Lower leg skin (tissue), 4 donors: ENCODE measurements at regions of chr4 and their contacts with region 1.

Region 1: DNA sequence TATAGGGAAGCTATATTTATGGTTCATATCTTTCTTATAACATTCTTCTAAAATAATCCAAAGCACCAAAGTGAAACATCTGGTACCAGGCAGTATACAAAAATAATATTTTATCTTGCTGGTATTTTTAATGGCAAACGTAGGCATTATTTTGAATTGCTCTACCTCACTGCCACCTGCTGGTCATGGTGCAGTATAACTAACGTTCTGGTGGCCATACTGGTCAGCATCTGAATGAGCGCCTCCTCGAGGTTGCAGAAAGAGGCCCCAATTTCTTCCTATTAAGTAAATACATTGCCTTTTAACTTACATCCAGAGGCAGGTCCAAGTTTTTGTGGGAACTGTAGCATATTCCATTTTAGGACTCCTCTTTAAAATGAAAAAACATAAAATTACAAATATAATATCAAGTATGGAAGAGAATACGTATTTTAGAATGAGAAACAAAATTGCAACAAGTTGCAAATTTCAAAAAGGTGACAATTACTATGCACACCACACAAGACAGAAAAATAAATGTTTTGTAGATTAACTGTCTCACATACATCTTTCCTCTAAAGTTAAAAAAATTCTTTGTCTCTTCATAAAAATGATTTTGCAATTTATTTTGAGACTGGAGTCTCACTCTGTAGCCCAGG is 22.9 kb upstream of the CWH43 start:
- DNase-seq: peak; percentile 51 to 88
- H3K4me3 ChIP-seq: no peak overlapping the region
- CTCF ChIP-seq: peak in 1 of 3 donors; percentile 50
- POLR2A ChIP-seq: no peak

Region 2: GRCh38 chr4:48578132-48578968 is 384.8 kb before region 1 on chr4:
- intact Hi-C with region 1: loop called (anchors 10 kb)
- DNase-seq: peak; percentile 77 to 82
- H3K4me3 ChIP-seq: no peak overlapping the region
- CTCF ChIP-seq: peak in 1 of 3 donors; percentile 58
- POLR2A ChIP-seq: no peak